GM12878 (cell line): ENCODE measurements at regions of chr1 and their contacts with region 1.

Region 1: DNA sequence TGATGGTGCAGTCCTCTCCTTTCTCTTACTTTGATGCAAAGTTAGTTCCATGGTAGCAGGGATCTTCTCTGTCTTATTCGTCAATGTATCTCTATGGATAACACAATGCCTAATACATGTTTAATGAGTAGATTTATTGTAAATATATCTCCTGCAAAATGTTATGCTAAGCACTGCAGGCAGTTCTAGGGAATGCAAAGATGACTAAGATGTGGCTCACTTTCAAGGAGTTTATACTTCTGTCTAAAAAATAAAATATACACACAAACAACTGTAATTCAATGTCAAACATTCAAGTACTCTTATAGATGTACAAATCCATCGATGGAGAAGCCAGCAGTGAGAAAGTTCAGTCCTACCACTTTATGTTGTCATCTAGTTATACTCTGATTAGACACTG is 194.3 kb downstream of the KCTD3 start:
- DNase-seq: no peak
- ATAC-seq: no peak
- H3K4me3 ChIP-seq: no peak overlapping the region
- H3K27ac ChIP-seq: no peak overlapping the region
- H3K4me1 ChIP-seq: no peaks in the 10 kb centered on the region
- H3K27me3 ChIP-seq: no peaks in the 10 kb centered on the region
- CTCF ChIP-seq: no peak
- EP300 ChIP-seq: no peak
- POLR2A ChIP-seq: no peak
- RAD21 ChIP-seq: no peak

Region 2: GRCh38 chr1:215340096-215340495 is 421.4 kb before region 1 on chr1:
- CTCF ChIA-PET with region 1: no interaction called
- POLR2A ChIA-PET with region 1: interaction called, 10 read pairs
- RAD21 ChIA-PET with region 1: no interaction called
- SMC1A ChIA-PET with region 1: no interaction called
- in situ Hi-C with region 1: no loop called
- intact Hi-C with region 1: no loop called
- DNase-seq: no peak
- ATAC-seq: no peak
- H3K4me3 ChIP-seq: no peak overlapping the region
- H3K27ac ChIP-seq: no peak overlapping the region
- H3K4me1 ChIP-seq: no peaks in the 10 kb centered on the region
- H3K27me3 ChIP-seq: no peaks in the 10 kb centered on the region
- CTCF ChIP-seq: no peak
- EP300 ChIP-seq: no peak
- POLR2A ChIP-seq: no peak
- RAD21 ChIP-seq: no peak

Region 3: GRCh38 chr1:215789981-215790380 is 28.5 kb after region 1 on chr1:
- CTCF ChIA-PET with region 1: no interaction called
- POLR2A ChIA-PET with region 1: no interaction called
- RAD21 ChIA-PET with region 1: no interaction called
- SMC1A ChIA-PET with region 1: no interaction called
- in situ Hi-C with region 1: no loop called
- intact Hi-C with region 1: no loop called
- DNase-seq: no peak
- ATAC-seq: no peak
- H3K4me3 ChIP-seq: no peak overlapping the region
- H3K27ac ChIP-seq: no peak overlapping the region
- H3K4me1 ChIP-seq: no peaks in the 10 kb centered on the region
- H3K27me3 ChIP-seq: no peaks in the 10 kb centered on the region
- CTCF ChIP-seq: no peak
- EP300 ChIP-seq: no peak
- POLR2A ChIP-seq: no peak
- RAD21 ChIP-seq: no peak